Activated CD8-positive, alpha-beta T cell treated with anti-CD3 and anti-CD28 coated beads for 36 hours (primary cell): ENCODE measurements at regions of chr17 and their contacts with region 1.

Region 1: GRCh38 chr17:2244545-2245525 is 58.8 kb downstream of the SMG6 start:
- DNase-seq: peak; percentile 90
- ATAC-seq: peak; percentile 93
- H3K4me3 Mint-ChIP-seq: no peak overlapping the region
- H3K27ac Mint-ChIP-seq: peak overlapping the region; percentile 60
- H3K4me1 Mint-ChIP-seq: peaks cover 51% of the 10 kb centered on the region
- H3K27me3 Mint-ChIP-seq: no peaks in the 10 kb centered on the region
- CTCF ChIP-seq: peak; percentile 98

Region 2: GRCh38 chr17:2064980-2065785 is 179.7 kb before region 1 on chr17:
- CTCF ChIA-PET with region 1: interaction called, 239 read pairs
- POLR2A ChIA-PET with region 1: interaction called, 4 read pairs
- intact Hi-C with region 1: no loop called
- DNase-seq: peak; percentile 89
- ATAC-seq: peak; percentile 77
- H3K4me3 Mint-ChIP-seq: no peak overlapping the region
- H3K27ac Mint-ChIP-seq: peak overlapping the region; percentile 41
- H3K4me1 Mint-ChIP-seq: peaks cover 38% of the 10 kb centered on the region
- H3K27me3 Mint-ChIP-seq: no peaks in the 10 kb centered on the region
- CTCF ChIP-seq: peak; percentile 71

Region 3: GRCh38 chr17:2120586-2121335 is 124.1 kb before region 1 on chr17:
- CTCF ChIA-PET with region 1: interaction called, 11 read pairs
- POLR2A ChIA-PET with region 1: no interaction called
- intact Hi-C with region 1: no loop called
- DNase-seq: no peak
- ATAC-seq: no peak
- H3K4me3 Mint-ChIP-seq: no peak overlapping the region
- H3K27ac Mint-ChIP-seq: no peak overlapping the region
- H3K4me1 Mint-ChIP-seq: peaks cover 20% of the 10 kb centered on the region
- H3K27me3 Mint-ChIP-seq: no peaks in the 10 kb centered on the region
- CTCF ChIP-seq: no peak

Region 4: GRCh38 chr17:2177235-2177811 is 67.5 kb before region 1 on chr17:
- CTCF ChIA-PET with region 1: interaction called, 15 read pairs
- POLR2A ChIA-PET with region 1: no interaction called
- intact Hi-C with region 1: no loop called
- DNase-seq: no peak
- ATAC-seq: no peak
- H3K4me3 Mint-ChIP-seq: no peak overlapping the region
- H3K27ac Mint-ChIP-seq: no peak overlapping the region
- H3K4me1 Mint-ChIP-seq: peaks cover 8% of the 10 kb centered on the region
- H3K27me3 Mint-ChIP-seq: no peaks in the 10 kb centered on the region
- CTCF ChIP-seq: no peak

Region 5: GRCh38 chr17:2215616-2216364 is 29.0 kb before region 1 on chr17:
- CTCF ChIA-PET with region 1: interaction called, 60 read pairs
- POLR2A ChIA-PET with region 1: no interaction called
- intact Hi-C with region 1: no loop called
- DNase-seq: peak; percentile 87
- ATAC-seq: peak; percentile 97
- H3K4me3 Mint-ChIP-seq: peak overlapping the region; percentile 74
- H3K27ac Mint-ChIP-seq: peak overlapping the region; percentile 95
- H3K4me1 Mint-ChIP-seq: peaks cover 56% of the 10 kb centered on the region
- H3K27me3 Mint-ChIP-seq: no peaks in the 10 kb centered on the region
- CTCF ChIP-seq: no peak

Region 6: GRCh38 chr17:2259769-2260536 is 15.1 kb after region 1 on chr17:
- CTCF ChIA-PET with region 1: interaction called, 119 read pairs
- POLR2A ChIA-PET with region 1: interaction called, 107 read pairs
- intact Hi-C with region 1: no loop called
- DNase-seq: peak; percentile 95
- ATAC-seq: peak; percentile 74
- H3K4me3 Mint-ChIP-seq: peak overlapping the region; percentile 75
- H3K27ac Mint-ChIP-seq: peak overlapping the region; percentile 97
- H3K4me1 Mint-ChIP-seq: peaks cover 75% of the 10 kb centered on the region
- H3K27me3 Mint-ChIP-seq: no peaks in the 10 kb centered on the region
- CTCF ChIP-seq: no peak

Region 7: GRCh38 chr17:2303204-2304188 is 58.7 kb after region 1 on chr17 and contains the starts of genes SMG6 and SRR:
- CTCF ChIA-PET with region 1: interaction called, 11 read pairs
- POLR2A ChIA-PET with region 1: no interaction called
- intact Hi-C with region 1: no loop called
- DNase-seq: peak; percentile 95
- ATAC-seq: peak; percentile 90
- H3K4me3 Mint-ChIP-seq: peak within 1 kb of the TSS; percentile 92
- H3K27ac Mint-ChIP-seq: peak within 1 kb of the TSS; percentile 83
- H3K4me1 Mint-ChIP-seq: peaks cover 38% of the 10 kb centered on the region
- H3K27me3 Mint-ChIP-seq: no peaks in the 10 kb centered on the region
- CTCF ChIP-seq: no peak
- total RNA-seq, gene SMG6: 39.6 to 40.4 TPM
- total RNA-seq, gene SRR: 9.6 to 12.7 TPM

Region 8: GRCh38 chr17:2361010-2361760 is 116.3 kb after region 1 on chr17:
- CTCF ChIA-PET with region 1: no interaction called
- POLR2A ChIA-PET with region 1: no interaction called
- intact Hi-C with region 1: no loop called
- DNase-seq: no peak
- ATAC-seq: no peak
- H3K4me3 Mint-ChIP-seq: no peak overlapping the region
- H3K27ac Mint-ChIP-seq: no peak overlapping the region
- H3K4me1 Mint-ChIP-seq: no peaks in the 10 kb centered on the region
- H3K27me3 Mint-ChIP-seq: no peaks in the 10 kb centered on the region
- CTCF ChIP-seq: no peak

Region 9: GRCh38 chr17:2602597-2603017 is 357.8 kb after region 1 on chr17:
- CTCF ChIA-PET with region 1: no interaction called
- POLR2A ChIA-PET with region 1: no interaction called
- intact Hi-C with region 1: no loop called
- DNase-seq: peak; percentile 23
- ATAC-seq: peak; percentile 71
- H3K4me3 Mint-ChIP-seq: no peak overlapping the region
- H3K27ac Mint-ChIP-seq: peak overlapping the region; percentile 50
- H3K4me1 Mint-ChIP-seq: peaks cover 55% of the 10 kb centered on the region
- H3K27me3 Mint-ChIP-seq: no peaks in the 10 kb centered on the region
- CTCF ChIP-seq: no peak